ENCODE measurements at regions of chr7 and their contacts with region 1.

Region 1: GRCh38 chr7:100126931-100127865 is at the start of gene MBLAC1:
- DNase-seq: peak; percentile 89
- H3K4me3 ChIP-seq: peak within 1 kb of the TSS; percentile 76 to 86
- H3K27ac ChIP-seq: peak within 1 kb of the TSS; percentile 96 to 98
- H3K4me1 ChIP-seq: no peaks in the 10 kb centered on the region
- H3K27me3 ChIP-seq: no peaks in the 10 kb centered on the region
- CTCF ChIP-seq: no peak
- POLR2A ChIP-seq: no peak
- total RNA-seq, gene MBLAC1: 4.4 to 6.1 TPM

Region 2: DNA sequence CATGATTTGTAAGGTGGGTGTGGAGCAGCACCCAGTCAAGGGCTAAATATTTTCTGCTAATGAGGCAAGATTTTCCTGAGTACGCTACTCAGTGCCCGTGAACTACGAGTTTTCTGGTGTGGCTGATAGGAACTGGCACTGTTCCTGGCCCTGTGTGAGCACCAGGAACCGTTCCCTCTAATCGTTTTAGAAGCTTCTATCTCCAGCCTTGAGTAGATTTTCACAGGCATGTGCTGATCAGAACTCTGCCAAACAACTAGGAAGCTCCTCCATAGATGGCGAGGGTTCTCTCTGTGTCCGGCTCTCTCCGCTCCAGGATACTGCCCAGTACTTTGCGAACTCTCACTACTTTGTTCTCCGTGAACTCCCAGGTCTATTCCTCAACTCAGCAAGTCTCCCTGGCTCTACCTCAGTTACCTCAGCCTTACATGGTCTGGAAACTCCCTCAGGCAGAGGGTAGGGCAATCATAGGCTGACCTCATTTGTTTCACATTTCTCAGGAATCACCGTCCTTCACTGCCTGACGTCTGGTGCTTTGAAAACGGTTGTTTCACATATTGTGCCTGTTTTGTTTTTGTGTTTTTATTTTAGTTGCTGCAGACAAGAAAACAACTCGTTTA is 225.5 kb before region 1 on chr7:
- intact Hi-C with region 1: no loop called
- DNase-seq: no peak
- H3K4me3 ChIP-seq: no peak overlapping the region
- H3K27ac ChIP-seq: no peak overlapping the region
- H3K4me1 ChIP-seq: no peaks in the 10 kb centered on the region
- H3K27me3 ChIP-seq: no peaks in the 10 kb centered on the region
- CTCF ChIP-seq: no peak
- POLR2A ChIP-seq: no peak

Region 3: GRCh38 chr7:99997545-99998137 is 129.6 kb before region 1 on chr7:
- intact Hi-C with region 1: loop called (anchors 10 kb)
- DNase-seq: peak; percentile 35
- H3K4me3 ChIP-seq: peak overlapping the region; percentile 21 to 31
- H3K27ac ChIP-seq: peak overlapping the region; percentile 90 to 93
- H3K4me1 ChIP-seq: peaks cover 6% of the 10 kb centered on the region
- H3K27me3 ChIP-seq: no peaks in the 10 kb centered on the region
- CTCF ChIP-seq: peak in 2 of 4 experiments; percentile 44 to 58
- POLR2A ChIP-seq: no peak

Region 4: DNA sequence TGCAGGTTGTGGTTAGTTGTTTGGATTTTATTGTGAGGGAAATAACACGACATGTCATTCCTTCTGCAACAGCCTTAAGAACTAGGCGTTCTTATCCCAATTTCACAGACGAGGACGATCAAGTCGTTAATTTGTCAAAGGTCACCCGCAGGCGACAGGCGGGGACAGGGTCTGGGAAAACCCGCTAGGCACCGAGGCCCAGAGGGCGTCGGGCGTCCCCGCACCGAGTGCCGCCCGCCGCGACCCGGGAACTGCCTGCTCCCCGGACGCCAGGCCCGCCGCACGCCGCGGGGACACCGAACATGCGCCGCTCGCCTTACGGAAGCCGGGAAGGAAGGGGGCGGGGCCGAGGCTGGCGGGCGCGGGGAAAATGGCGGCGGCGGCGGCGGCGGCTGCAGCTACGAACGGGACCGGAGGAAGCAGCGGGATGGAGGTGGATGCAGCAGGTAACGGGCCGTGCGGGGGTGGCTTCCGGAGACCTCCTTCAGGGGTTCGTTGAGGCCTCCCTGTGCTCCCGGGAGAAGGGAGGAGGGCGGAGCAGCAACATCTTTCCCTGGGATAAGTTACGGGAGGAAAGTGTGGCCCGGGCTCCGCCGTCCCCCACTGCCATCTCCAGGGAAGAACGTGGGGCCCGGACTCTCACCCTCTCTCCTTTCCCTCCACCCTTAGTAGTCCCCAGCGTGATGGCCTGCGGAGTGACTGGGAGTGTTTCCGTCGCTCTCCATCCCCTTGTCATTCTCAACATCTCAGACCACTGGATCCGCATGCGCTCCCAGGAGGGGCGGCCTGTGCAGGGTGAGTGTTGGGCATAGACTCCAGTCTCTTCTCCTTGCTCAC is 38.4 kb before region 1 on chr7 and contains the start of gene COPS6:
- intact Hi-C with region 1: loop called (anchors 5 kb)
- DNase-seq: peak; percentile 72
- H3K4me3 ChIP-seq: peak within 1 kb of the TSS; percentile 87 to 94
- H3K27ac ChIP-seq: peak within 1 kb of the TSS; percentile 83 to 86
- H3K4me1 ChIP-seq: peaks cover 4% of the 10 kb centered on the region
- H3K27me3 ChIP-seq: no peaks in the 10 kb centered on the region
- CTCF ChIP-seq: peak in 2 of 4 experiments; percentile 3 to 31
- POLR2A ChIP-seq: no peak
- total RNA-seq, gene COPS6: 50.8 to 78.4 TPM

Region 5: DNA sequence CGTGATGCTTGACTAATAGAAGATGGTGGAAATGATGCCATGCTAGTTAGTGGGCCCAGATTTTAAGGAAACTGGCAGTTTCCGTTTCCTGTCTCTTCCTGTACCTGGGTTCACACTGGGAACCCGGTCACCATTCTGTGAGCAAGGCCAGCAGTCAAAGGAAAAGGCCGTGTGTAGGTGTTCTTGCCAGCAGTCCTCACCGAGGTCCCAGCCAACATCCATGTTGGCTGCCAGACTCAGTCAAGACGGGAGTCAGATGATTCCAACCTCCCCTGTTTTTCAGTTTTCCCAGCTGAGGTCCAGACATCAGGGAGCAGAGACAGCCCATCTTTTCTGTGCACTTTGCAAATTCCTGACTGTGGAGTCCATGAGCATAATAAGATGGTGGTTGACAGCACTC is 215.6 kb after region 1 on chr7:
- intact Hi-C with region 1: loop called (anchors 10 kb)
- DNase-seq: no peak
- H3K4me3 ChIP-seq: no peak overlapping the region
- H3K27ac ChIP-seq: no peak overlapping the region
- H3K4me1 ChIP-seq: peaks cover 3% of the 10 kb centered on the region
- H3K27me3 ChIP-seq: no peaks in the 10 kb centered on the region
- CTCF ChIP-seq: no peak
- POLR2A ChIP-seq: no peak